Heart left ventricle (tissue), 16 donors: ENCODE measurements at regions of chr12 and their contacts with region 1.

Region 1: DNA sequence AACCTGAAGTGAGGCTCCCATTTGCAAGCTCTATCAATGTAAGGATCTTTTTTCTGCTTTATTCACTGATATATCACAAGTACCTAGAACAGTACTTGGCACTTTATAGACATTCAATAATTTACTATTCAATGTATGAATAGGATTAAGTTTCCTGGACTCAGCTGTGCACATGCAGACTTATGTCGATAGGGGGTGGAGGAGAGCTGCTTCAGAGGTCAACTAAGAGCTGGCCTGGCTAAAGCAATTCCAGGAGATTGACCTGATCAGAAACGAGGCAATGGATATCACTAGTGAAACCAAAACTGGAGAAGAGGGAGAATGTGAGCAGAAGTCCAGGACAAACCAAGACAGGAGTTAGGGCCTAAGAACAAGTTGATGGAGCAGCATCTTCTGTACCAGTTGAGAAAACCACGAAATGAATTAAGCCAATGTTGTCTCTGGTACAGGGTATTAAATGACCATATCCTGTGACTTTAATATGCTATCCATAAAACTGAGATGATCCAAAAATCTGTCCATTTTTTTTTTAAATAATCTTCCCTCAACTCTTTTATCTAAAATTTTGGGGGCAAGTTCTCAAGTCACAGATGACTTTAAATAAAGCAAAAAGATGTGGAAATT is 169.2 kb downstream of the PIK3C2G start:
- DNase-seq: peak in 3 of 5 donors; percentile 31 to 35 (median 33)
- ATAC-seq: peak; percentile 64 to 92 (median 87)
- H3K4me3 ChIP-seq: no peak overlapping the region
- H3K27ac ChIP-seq: no peak overlapping the region
- H3K4me1 ChIP-seq: peaks cover 0 to 16% (median 2%) of the 10 kb centered on the region in 12 donors
- H3K27me3 ChIP-seq: no peaks in the 10 kb centered on the region
- CTCF ChIP-seq: peak; percentile 56 to 90 (median 78)
- POLR2A ChIP-seq: no peak

Region 2: DNA sequence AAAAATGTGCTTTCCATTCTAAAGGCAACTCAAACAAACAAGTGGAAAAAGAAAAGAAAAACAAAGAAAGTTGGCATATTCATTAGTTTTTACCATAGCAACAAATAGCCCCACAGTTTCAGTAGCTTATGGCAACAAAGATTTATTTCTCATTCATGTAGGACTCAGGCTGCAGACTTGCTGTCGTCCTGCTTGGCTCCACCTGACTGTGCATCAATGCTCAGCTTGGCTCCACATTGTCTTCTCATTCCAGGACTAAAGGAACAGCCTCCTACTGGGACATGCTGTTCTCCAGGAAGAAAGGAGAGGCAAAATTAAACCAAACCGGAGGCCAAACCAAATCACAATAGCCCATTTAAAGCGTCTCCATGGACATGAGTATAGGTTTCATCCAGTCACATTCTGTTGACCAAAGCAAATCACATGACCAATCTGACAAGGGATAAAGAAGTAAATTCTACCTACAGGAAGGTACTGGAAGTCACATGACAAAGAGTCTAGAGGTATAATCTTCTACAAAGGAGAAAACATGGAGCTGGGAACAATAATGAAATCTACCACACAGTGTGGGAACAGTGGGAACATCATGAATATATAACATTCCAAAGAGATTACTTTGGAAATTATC is 53.3 kb after region 1 on chr12:
- intact Hi-C with region 1: no loop called
- DNase-seq: no peak
- ATAC-seq: no peak
- H3K4me3 ChIP-seq: no peak overlapping the region
- H3K27ac ChIP-seq: no peak overlapping the region
- H3K4me1 ChIP-seq: no peaks in the 10 kb centered on the region
- H3K27me3 ChIP-seq: no peaks in the 10 kb centered on the region
- CTCF ChIP-seq: no peak
- POLR2A ChIP-seq: no peak

Region 3: DNA sequence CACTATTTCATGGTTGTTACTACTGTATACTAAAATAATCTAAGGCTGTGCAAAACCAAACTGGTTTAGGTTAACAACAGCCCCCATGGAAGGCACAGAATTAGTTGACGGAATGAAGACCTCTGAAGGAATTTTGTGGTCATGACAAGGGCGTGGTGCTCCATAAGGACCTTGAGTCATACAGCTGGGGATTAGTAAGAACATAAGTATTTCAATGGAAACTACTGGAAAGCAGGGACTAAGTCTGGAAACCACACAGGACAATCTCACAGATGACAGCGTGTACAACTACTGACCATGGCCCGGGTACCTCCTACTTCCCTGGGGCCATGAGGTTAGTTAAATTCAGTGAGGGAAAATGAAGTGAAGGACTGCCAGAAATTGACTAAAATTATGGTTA is 600.5 kb after region 1 on chr12:
- intact Hi-C with region 1: loop called in 1 of 10 experiments (anchors 5 kb)
- DNase-seq: no peak
- ATAC-seq: peak; percentile 16 to 61 (median 60)
- H3K4me3 ChIP-seq: no peak overlapping the region
- H3K27ac ChIP-seq: peak overlapping the region in 2 of 12 donors; percentile 11 to 25
- H3K4me1 ChIP-seq: peaks cover 0 to 21% (median 5%) of the 10 kb centered on the region in 12 donors
- H3K27me3 ChIP-seq: no peaks in the 10 kb centered on the region
- CTCF ChIP-seq: no peak
- POLR2A ChIP-seq: no peak

Region 4: GRCh38 chr12:19299765-19300164 is 869.2 kb after region 1 on chr12:
- intact Hi-C with region 1: loop called in 1 of 10 experiments (anchors 10 kb)
- DNase-seq: no peak
- ATAC-seq: no peak
- H3K4me3 ChIP-seq: no peak overlapping the region
- H3K27ac ChIP-seq: no peak overlapping the region
- H3K4me1 ChIP-seq: no peaks in the 10 kb centered on the region
- H3K27me3 ChIP-seq: no peaks in the 10 kb centered on the region
- CTCF ChIP-seq: no peak
- POLR2A ChIP-seq: no peak

Region 5: GRCh38 chr12:19553175-19553574 is 1122.6 kb after region 1 on chr12:
- intact Hi-C with region 1: loop called in 1 of 10 experiments (anchors 5 kb)
- DNase-seq: no peak
- ATAC-seq: no peak
- H3K4me3 ChIP-seq: no peak overlapping the region
- H3K27ac ChIP-seq: no peak overlapping the region
- H3K4me1 ChIP-seq: peaks cover 0 to 15% (median 3%) of the 10 kb centered on the region in 12 donors
- H3K27me3 ChIP-seq: no peaks in the 10 kb centered on the region
- CTCF ChIP-seq: no peak
- POLR2A ChIP-seq: no peak